Caco-2 (cell line): ENCODE measurements at regions of chr21 and their contacts with region 1.

Region 1: GRCh38 chr21:44497703-44498126 is 42.3 kb downstream of the KRTAP10-1 start:
- DNase-seq: peak in 1 of 2 experiments; percentile 19
- H3K4me3 ChIP-seq: no peak overlapping the region
- H3K4me3 Mint-ChIP-seq: no peak overlapping the region
- H3K27ac Mint-ChIP-seq: no peak overlapping the region
- H3K4me1 ChIP-seq: no peaks in the 10 kb centered on the region
- H3K4me1 Mint-ChIP-seq: no peaks in the 10 kb centered on the region
- H3K27me3 ChIP-seq: no peaks in the 10 kb centered on the region
- H3K27me3 Mint-ChIP-seq: no peaks in the 10 kb centered on the region
- CTCF ChIP-seq: no peak

Region 2: DNA sequence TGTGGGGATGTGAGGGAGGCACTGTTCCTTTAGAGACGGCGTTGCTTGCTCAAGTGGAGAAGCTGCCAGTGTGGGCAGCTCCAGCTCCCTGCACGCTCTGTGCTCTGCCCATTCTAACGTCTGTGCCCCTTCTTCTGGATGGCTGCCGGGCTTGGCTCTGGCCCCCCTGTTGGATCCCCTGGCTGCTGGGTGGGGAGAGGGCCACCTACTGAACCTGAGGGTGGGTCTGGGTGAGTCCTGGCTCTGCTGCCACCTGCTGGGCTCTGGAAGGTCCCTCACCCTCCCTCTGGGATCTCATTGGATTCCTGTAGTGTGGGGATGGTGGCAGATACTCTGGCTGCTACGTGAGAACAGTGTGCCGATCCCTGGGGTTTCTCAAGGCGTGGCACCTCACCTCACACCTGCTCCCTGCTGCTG is 192.8 kb before region 1 on chr21:
- CTCF ChIA-PET with region 1: interaction called, 11 read pairs
- POLR2A ChIA-PET with region 1: no interaction called
- intact Hi-C with region 1: no loop called
- DNase-seq: peak; percentile 56 to 65
- H3K4me3 ChIP-seq: no peak overlapping the region
- H3K4me3 Mint-ChIP-seq: no peak overlapping the region
- H3K27ac Mint-ChIP-seq: peak overlapping the region; percentile 23
- H3K4me1 ChIP-seq: peaks cover 34% of the 10 kb centered on the region
- H3K4me1 Mint-ChIP-seq: peaks cover 16% of the 10 kb centered on the region
- H3K27me3 ChIP-seq: no peaks in the 10 kb centered on the region
- H3K27me3 Mint-ChIP-seq: no peaks in the 10 kb centered on the region
- CTCF ChIP-seq: peak; percentile 49 to 77

Region 3: GRCh38 chr21:44331650-44332307 is 165.9 kb before region 1 on chr21:
- CTCF ChIA-PET with region 1: no interaction called
- POLR2A ChIA-PET with region 1: no interaction called
- intact Hi-C with region 1: no loop called
- DNase-seq: no peak
- H3K4me3 ChIP-seq: no peak overlapping the region
- H3K4me3 Mint-ChIP-seq: no peak overlapping the region
- H3K27ac Mint-ChIP-seq: peak overlapping the region; percentile 81
- H3K4me1 ChIP-seq: no peaks in the 10 kb centered on the region
- H3K4me1 Mint-ChIP-seq: no peaks in the 10 kb centered on the region
- H3K27me3 ChIP-seq: no peaks in the 10 kb centered on the region
- H3K27me3 Mint-ChIP-seq: no peaks in the 10 kb centered on the region
- CTCF ChIP-seq: no peak

Region 4: DNA sequence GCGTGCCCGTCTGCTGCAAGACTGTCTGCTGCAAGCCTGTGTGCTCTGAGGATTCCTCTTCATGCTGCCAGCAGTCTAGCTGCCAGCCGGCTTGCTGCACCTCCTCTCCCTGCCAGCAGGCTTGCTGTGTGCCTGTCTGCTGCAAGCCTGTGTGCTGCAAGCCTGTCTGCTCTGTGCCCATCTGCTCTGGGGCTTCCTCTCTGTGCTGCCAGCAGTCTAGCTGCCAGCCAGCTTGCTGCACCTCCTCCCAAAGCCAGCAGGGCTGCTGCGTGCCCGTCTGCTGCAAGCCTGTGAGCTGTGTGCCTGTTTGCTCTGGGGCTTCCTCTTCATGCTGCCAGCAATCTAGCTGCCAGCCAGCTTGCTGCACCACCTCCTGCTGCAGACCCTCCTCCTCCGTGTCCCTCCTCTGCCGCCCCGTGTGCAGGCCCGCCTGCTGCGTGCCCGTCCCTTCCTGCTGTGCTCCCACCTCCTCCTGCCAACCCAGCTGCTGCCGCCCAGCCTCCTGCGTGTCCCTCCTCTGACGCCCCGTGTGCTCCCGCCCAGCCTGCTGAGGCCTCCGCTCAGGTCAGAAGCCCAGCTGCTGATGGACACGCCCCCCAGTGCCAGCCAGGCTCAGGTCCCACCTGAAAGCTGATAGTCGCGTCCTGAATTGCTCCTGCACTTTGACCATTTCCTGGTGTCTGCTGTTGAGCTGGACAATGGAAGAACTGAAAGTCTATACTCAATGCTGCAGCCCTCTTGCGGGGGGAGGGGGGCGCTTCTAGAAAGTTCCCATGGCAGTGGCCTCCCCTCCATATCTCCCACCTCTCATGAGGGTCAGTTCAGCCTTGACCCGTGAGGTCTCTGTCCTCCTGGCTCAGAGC is 77.0 kb after region 1 on chr21:
- CTCF ChIA-PET with region 1: no interaction called
- POLR2A ChIA-PET with region 1: no interaction called
- intact Hi-C with region 1: no loop called
- DNase-seq: peak in 1 of 2 experiments; percentile 32
- H3K4me3 ChIP-seq: no peak overlapping the region; the same call in 1 of the 2 replicates
- H3K4me3 Mint-ChIP-seq: peak overlapping the region; percentile 47
- H3K27ac Mint-ChIP-seq: no peak overlapping the region
- H3K4me1 ChIP-seq: no peaks in the 10 kb centered on the region
- H3K4me1 Mint-ChIP-seq: peaks cover 8% of the 10 kb centered on the region
- H3K27me3 ChIP-seq: no peaks in the 10 kb centered on the region
- H3K27me3 Mint-ChIP-seq: no peaks in the 10 kb centered on the region
- CTCF ChIP-seq: no peak

Region 5: GRCh38 chr21:44615911-44616590 is 118.3 kb after region 1 on chr21:
- CTCF ChIA-PET with region 1: no interaction called
- POLR2A ChIA-PET with region 1: no interaction called
- intact Hi-C with region 1: no loop called
- DNase-seq: no peak
- H3K4me3 ChIP-seq: no peak overlapping the region
- H3K4me3 Mint-ChIP-seq: no peak overlapping the region
- H3K27ac Mint-ChIP-seq: no peak overlapping the region
- H3K4me1 ChIP-seq: no peaks in the 10 kb centered on the region
- H3K4me1 Mint-ChIP-seq: no peaks in the 10 kb centered on the region
- H3K27me3 ChIP-seq: no peaks in the 10 kb centered on the region
- H3K27me3 Mint-ChIP-seq: peaks cover 6% of the 10 kb centered on the region
- CTCF ChIP-seq: no peak